CD8-positive, alpha-beta T cell (primary cell): ENCODE measurements at regions of chr21 and their contacts with region 1.

Region 1: DNA sequence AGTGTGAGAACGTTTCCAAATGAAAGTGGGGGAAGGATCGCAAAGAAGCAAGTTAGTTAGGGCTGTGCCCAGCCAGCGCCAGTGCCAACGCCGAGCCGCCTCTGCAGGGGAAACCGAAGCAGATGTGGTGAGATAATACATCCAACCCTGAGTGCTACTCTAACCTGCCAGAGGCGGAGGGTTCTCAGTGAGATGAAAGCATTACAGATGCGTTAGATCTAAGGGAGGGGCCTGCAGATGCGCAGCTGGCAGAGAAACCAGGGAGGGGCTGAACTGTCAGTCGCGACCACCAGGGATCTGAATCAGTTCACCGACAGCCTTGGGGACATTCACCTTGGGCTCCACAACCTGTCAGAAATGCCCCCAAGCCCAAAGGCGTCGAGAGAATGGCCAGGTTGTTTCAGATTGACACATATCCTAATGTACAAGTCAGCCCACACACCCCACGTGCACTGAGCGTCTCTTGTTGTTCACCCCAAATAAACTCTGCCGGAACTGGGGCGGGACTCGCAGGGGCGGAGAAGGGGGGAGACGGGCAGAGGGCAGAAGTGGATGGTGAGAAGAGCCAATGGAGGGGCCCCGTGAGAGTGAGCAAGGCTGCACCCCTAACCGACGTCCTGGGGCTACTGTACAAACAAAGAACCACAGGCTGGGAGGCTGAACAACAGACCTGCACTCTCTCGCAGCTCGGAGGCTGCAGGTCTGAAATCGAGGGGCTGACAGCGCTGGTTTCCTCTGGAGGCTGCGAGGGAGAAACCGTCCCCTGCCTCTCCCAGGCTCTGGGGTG is 8.7 kb upstream of the UMODL1 start:
- DNase-seq: peak; percentile 86 to 98 (median 92)
- ATAC-seq: peak; percentile 83
- H3K4me3 ChIP-seq: peak overlapping the region; percentile 56 to 59
- H3K4me3 Mint-ChIP-seq: peak overlapping the region; percentile 89
- H3K27ac ChIP-seq: peak overlapping the region; percentile 82 to 83
- H3K27ac Mint-ChIP-seq: peak overlapping the region; percentile 99
- H3K4me1 ChIP-seq: peaks cover 32% of the 10 kb centered on the region
- H3K4me1 Mint-ChIP-seq: peaks cover 64% of the 10 kb centered on the region
- H3K27me3 ChIP-seq: peaks cover 0 to 2% of the 10 kb centered on the region in 2 experiments
- H3K27me3 Mint-ChIP-seq: no peaks in the 10 kb centered on the region
- CTCF ChIP-seq: no peak

Region 2: GRCh38 chr21:41768437-41769061 is 293.9 kb before region 1 on chr21:
- CTCF ChIA-PET with region 1: no interaction called
- POLR2A ChIA-PET with region 1: no interaction called
- intact Hi-C with region 1: loop called in 1 of 2 experiments (anchors 5 kb)
- DNase-seq: peak in 5 of 9 experiments; percentile 18 to 54 (median 26)
- ATAC-seq: peak; percentile 37
- H3K4me3 ChIP-seq: peak overlapping the region; percentile 33 to 40
- H3K4me3 Mint-ChIP-seq: peak overlapping the region; percentile 85
- H3K27ac ChIP-seq: no peak overlapping the region
- H3K27ac Mint-ChIP-seq: no peak overlapping the region
- H3K4me1 ChIP-seq: peaks cover 20% of the 10 kb centered on the region
- H3K4me1 Mint-ChIP-seq: peaks cover 26% of the 10 kb centered on the region
- H3K27me3 ChIP-seq: peaks cover 5 to 9% of the 10 kb centered on the region in 2 experiments
- H3K27me3 Mint-ChIP-seq: peaks cover 70% of the 10 kb centered on the region
- CTCF ChIP-seq: no peak

Region 3: DNA sequence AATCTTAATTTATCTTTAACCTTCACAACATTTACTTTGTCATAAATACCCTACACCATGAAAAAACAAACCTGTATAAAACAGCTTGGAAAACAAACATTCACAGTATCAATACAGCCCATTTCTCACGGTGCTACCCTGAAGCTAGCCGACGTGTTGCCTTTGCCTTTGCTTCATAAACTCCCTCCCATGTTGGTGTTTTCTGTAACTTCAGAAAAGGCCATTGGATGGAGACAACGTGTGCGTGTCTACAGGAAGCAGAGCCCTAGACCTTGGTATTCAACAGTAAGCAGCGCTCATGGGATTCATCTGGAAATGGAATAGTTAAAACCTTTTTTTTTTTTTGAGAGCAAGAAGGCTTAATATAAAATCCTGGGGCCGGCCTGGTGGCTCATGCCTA is 176.1 kb before region 1 on chr21:
- CTCF ChIA-PET with region 1: no interaction called
- POLR2A ChIA-PET with region 1: no interaction called
- intact Hi-C with region 1: no loop called
- DNase-seq: no peak
- ATAC-seq: no peak
- H3K4me3 ChIP-seq: no peak overlapping the region
- H3K4me3 Mint-ChIP-seq: no peak overlapping the region
- H3K27ac ChIP-seq: no peak overlapping the region
- H3K27ac Mint-ChIP-seq: no peak overlapping the region
- H3K4me1 ChIP-seq: no peaks in the 10 kb centered on the region
- H3K4me1 Mint-ChIP-seq: peaks cover 3% of the 10 kb centered on the region
- H3K27me3 ChIP-seq: no peaks in the 10 kb centered on the region
- H3K27me3 Mint-ChIP-seq: no peaks in the 10 kb centered on the region
- CTCF ChIP-seq: no peak

Region 4: DNA sequence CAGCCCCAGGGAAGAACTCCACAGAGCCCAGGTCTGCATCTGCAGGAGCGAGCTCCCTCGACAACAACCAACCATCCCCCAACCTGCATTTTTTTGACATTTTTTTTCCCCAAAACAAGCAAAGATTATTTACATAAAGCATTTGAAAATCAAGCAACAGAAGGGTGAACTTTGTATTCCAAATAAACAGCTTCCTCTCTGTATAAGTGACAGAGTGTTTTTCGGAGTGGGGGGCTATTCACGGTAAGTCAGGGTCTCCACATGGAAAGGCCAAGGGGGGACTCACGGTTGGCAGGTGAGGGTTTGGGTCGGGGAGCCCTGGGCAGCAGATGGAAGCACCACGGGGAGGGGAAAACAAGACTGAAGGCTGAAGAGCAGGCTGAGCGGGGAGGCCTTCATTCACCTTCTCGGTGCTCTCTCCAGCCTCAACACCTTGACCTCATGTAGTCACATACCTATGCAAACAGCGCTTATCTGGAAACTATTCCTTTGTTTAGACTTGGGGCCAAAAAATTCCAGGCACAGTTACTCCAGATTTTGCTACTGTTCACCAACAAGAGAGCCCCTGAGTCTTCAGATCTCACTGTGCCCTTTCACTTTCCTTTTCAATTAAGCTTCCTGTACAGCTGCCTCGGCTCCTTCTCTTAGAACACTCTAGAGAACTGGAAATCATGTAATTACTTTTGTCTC is 136.2 kb before region 1 on chr21:
- CTCF ChIA-PET with region 1: no interaction called
- POLR2A ChIA-PET with region 1: interaction called, 9 read pairs
- intact Hi-C with region 1: loop called in 1 of 2 experiments (anchors 1 kb)
- DNase-seq: peak in 8 of 9 experiments; percentile 14 to 81 (median 32)
- ATAC-seq: peak; percentile 91
- H3K4me3 ChIP-seq: peak overlapping the region; percentile 53 to 64
- H3K4me3 Mint-ChIP-seq: peak overlapping the region; percentile 96
- H3K27ac ChIP-seq: peak overlapping the region; percentile 72 to 89
- H3K27ac Mint-ChIP-seq: peak overlapping the region; percentile 99
- H3K4me1 ChIP-seq: peaks cover 42% of the 10 kb centered on the region
- H3K4me1 Mint-ChIP-seq: peaks cover 55% of the 10 kb centered on the region
- H3K27me3 ChIP-seq: no peaks in the 10 kb centered on the region
- H3K27me3 Mint-ChIP-seq: no peaks in the 10 kb centered on the region
- CTCF ChIP-seq: no peak

Region 5: GRCh38 chr21:42009831-42010523 is 52.5 kb before region 1 on chr21 and contains the start of gene ZBTB21:
- CTCF ChIA-PET with region 1: interaction called, 18 read pairs
- POLR2A ChIA-PET with region 1: interaction called, 86 read pairs
- intact Hi-C with region 1: loop called (anchors 1 kb)
- DNase-seq: peak; percentile 95 to 99 (median 98)
- ATAC-seq: peak; percentile 75
- H3K4me3 ChIP-seq: peak within 1 kb of the TSS; percentile 64 to 95
- H3K4me3 Mint-ChIP-seq: peak within 1 kb of the TSS; percentile 98
- H3K27ac ChIP-seq: peak within 1 kb of the TSS; percentile 96 to 100
- H3K27ac Mint-ChIP-seq: peak within 1 kb of the TSS; percentile 100
- H3K4me1 ChIP-seq: peaks cover 5% of the 10 kb centered on the region
- H3K4me1 Mint-ChIP-seq: peaks cover 38% of the 10 kb centered on the region
- H3K27me3 ChIP-seq: no peaks in the 10 kb centered on the region
- H3K27me3 Mint-ChIP-seq: no peaks in the 10 kb centered on the region
- CTCF ChIP-seq: no peak
- total RNA-seq, gene ZBTB21: 130 to 141 TPM

Region 6: DNA sequence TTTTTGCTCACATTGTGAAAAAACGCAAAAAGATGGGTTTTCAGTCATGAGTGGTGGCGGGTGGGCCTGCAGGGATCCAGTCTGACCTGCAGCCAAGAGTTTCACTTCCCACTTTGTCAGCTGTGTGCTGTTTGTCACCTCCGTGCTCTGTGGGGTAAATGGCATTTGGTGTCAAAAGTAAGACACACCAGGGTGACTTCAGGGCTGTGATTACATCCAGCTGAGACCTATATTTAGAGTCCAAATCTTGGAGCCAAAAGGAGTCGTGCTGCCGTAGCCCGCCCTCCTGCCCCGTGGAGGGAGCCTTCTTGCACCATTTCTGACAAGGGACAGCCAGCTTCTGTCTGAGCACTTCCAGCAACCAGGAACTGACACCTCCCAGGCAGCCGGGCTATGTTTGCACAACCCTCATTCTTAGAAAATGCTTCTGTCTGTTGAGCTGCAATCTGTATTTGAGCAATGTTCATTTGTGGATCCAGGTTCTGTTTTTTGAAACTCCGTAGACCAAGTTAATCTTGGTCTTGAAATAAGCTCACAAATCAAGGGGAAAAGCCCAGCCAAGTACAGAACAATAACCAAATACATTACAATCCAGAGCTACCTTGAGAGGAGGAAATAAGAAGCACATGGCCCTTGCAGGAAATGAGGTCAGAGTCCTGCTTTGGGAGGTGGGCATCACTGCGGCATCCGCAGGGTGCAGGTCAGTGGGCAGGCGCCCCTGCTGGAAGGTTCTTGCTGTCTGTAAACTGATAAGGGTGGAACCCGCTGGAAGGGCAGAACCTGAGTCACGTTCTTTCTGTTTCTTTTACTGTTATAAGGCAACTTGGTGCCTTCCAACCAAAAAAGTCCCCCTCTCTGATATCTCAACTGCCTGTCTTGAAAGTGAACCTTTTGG is 170.9 kb after region 1 on chr21:
- CTCF ChIA-PET with region 1: no interaction called
- POLR2A ChIA-PET with region 1: no interaction called
- intact Hi-C with region 1: loop called (anchors 5 kb)
- DNase-seq: peak; percentile 49 to 95 (median 72)
- ATAC-seq: peak; percentile 57
- H3K4me3 ChIP-seq: peak overlapping the region in 1 of 2 experiments; percentile 1
- H3K4me3 Mint-ChIP-seq: peak overlapping the region; percentile 70
- H3K27ac ChIP-seq: peak overlapping the region; percentile 69 to 93
- H3K27ac Mint-ChIP-seq: peak overlapping the region; percentile 95
- H3K4me1 ChIP-seq: peaks cover 80% of the 10 kb centered on the region
- H3K4me1 Mint-ChIP-seq: peaks cover 94% of the 10 kb centered on the region
- H3K27me3 ChIP-seq: no peaks in the 10 kb centered on the region
- H3K27me3 Mint-ChIP-seq: no peaks in the 10 kb centered on the region
- CTCF ChIP-seq: peak; percentile 50

Region 7: GRCh38 chr21:42973991-42974831 is 911.8 kb after region 1 on chr21 and contains the start of gene PKNOX1:
- CTCF ChIA-PET with region 1: no interaction called
- POLR2A ChIA-PET with region 1: no interaction called
- intact Hi-C with region 1: loop called in 1 of 2 experiments (anchors 10 kb)
- DNase-seq: peak; percentile 98 to 100 (median 99)
- ATAC-seq: peak; percentile 85
- H3K4me3 ChIP-seq: peak within 1 kb of the TSS; percentile 83 to 87
- H3K4me3 Mint-ChIP-seq: peak within 1 kb of the TSS; percentile 91
- H3K27ac ChIP-seq: peak within 1 kb of the TSS; percentile 81 to 98
- H3K27ac Mint-ChIP-seq: peak within 1 kb of the TSS; percentile 94
- H3K4me1 ChIP-seq: peaks cover 18% of the 10 kb centered on the region
- H3K4me1 Mint-ChIP-seq: peaks cover 22% of the 10 kb centered on the region
- H3K27me3 ChIP-seq: no peaks in the 10 kb centered on the region
- H3K27me3 Mint-ChIP-seq: no peaks in the 10 kb centered on the region
- CTCF ChIP-seq: no peak
- total RNA-seq, gene PKNOX1: 10.3 to 11.1 TPM